BJ (cell line): ENCODE measurements at regions of chr5 and their contacts with region 1.

Region 1: DNA sequence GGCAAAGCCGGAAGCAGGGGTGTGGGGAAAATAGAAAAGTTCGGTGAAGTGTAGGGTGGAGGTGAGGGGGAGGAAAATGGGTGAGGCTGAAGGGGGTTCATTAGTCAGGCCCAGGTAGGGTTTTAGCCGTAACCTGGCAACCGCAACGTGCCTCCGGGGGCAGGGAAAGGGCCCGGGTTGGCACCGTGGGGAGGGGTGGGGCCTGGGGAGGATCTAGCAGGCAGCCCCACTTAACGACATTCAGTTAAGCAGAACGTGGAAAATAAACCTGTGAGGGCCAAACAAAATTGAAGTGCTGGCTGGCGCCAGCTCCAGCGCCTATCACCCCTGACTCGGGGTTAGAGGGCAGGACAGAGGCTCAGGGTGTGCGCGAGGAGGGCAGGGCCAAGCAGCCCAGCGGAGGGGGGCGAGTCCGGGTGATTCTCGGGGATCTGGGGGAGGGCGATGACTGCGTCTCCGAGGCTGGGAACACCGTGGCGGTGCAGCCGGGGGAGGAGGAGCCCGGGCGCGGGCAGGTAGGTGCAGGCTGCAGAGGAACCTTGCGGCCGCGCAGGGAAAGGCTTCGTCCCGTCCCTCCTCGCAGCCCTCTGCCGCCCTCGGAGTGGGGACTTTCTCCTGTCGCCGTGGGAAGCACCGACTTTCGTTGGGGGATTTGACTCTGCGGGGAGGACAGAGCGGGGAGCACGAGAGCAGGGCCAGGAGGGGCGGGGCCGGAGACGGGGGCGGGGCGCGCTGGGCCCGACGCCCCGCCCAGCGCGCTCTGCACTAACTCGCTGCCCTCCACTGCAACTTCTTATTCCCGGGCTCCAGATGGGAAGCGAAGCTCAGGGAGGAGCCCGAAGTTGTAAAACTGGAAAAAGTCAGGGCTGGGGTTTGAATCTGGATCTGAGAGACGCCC is 5.1 kb downstream of the RGS14 start:
- DNase-seq: no peak
- H3K4me3 ChIP-seq: peak overlapping the region; percentile 43
- H3K27me3 ChIP-seq: no peaks in the 10 kb centered on the region
- CTCF ChIP-seq: peak; percentile 2; the same call in 1 of the 2 replicates

Region 2: GRCh38 chr5:177346820-177347219 is 16.0 kb before region 1 on chr5:
- CTCF ChIA-PET with region 1: interaction called, 9 read pairs
- POLR2A ChIA-PET with region 1: interaction called, 15 read pairs
- DNase-seq: no peak
- H3K4me3 ChIP-seq: no peak overlapping the region
- H3K27me3 ChIP-seq: no peaks in the 10 kb centered on the region
- CTCF ChIP-seq: no peak

Region 3: GRCh38 chr5:177390363-177391300 is 27.8 kb after region 1 on chr5:
- CTCF ChIA-PET with region 1: interaction called, 12 read pairs
- POLR2A ChIA-PET with region 1: no interaction called
- DNase-seq: no peak
- H3K4me3 ChIP-seq: no peak overlapping the region
- H3K27me3 ChIP-seq: peaks cover 11% of the 10 kb centered on the region
- CTCF ChIP-seq: peak; percentile 95

Region 4: GRCh38 chr5:177472460-177473441 is 109.9 kb after region 1 on chr5:
- CTCF ChIA-PET with region 1: no interaction called
- POLR2A ChIA-PET with region 1: no interaction called
- DNase-seq: no peak
- H3K4me3 ChIP-seq: peak overlapping the region; percentile 54
- H3K27me3 ChIP-seq: no peaks in the 10 kb centered on the region
- CTCF ChIP-seq: no peak